AG04449 (cell line): ENCODE measurements at regions of chr19 and their contacts with region 1.

Region 1: DNA sequence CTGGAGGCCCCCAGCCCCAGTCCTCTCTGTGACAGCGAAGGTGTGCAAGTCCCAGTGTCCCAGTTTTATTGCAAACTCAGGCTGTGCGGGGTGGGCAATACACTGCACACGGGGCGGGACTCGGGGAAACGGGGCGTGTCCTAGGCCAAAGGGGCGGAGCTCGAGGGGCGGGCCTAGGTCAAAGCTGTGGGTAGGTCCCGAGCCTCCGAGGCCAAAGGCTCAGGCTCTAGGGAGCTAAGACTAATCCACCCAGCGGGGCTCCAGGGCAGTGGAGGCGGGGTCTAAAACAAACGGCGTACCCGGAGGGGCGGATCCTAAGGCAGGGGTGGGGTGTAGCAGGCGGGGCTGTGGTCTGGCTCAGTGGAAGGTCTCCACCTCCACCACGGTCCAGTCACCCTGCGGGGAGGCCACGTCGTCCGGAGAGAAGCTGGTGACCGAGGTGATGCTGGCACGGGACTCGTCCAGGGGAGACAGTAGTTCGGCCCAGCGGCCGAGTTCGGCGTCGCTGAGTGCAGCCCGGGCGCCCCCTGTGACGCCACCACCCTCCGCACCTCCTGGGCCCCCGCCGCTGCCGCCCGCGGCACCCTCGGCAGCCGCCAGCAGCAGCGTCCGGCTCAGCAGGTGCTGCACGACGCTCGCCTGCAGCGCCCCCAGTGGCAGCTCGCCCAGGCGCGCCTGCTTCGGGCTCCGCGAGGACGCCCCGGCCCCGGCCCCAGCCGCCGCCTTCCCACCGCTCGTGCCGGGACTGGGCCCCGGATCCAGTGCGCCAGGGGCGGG is 5.3 kb downstream of the PRR36 start:
- DNase-seq: no peak
- H3K4me3 ChIP-seq: peak overlapping the region; percentile 50
- CTCF ChIP-seq: peak; percentile 73

Region 2: DNA sequence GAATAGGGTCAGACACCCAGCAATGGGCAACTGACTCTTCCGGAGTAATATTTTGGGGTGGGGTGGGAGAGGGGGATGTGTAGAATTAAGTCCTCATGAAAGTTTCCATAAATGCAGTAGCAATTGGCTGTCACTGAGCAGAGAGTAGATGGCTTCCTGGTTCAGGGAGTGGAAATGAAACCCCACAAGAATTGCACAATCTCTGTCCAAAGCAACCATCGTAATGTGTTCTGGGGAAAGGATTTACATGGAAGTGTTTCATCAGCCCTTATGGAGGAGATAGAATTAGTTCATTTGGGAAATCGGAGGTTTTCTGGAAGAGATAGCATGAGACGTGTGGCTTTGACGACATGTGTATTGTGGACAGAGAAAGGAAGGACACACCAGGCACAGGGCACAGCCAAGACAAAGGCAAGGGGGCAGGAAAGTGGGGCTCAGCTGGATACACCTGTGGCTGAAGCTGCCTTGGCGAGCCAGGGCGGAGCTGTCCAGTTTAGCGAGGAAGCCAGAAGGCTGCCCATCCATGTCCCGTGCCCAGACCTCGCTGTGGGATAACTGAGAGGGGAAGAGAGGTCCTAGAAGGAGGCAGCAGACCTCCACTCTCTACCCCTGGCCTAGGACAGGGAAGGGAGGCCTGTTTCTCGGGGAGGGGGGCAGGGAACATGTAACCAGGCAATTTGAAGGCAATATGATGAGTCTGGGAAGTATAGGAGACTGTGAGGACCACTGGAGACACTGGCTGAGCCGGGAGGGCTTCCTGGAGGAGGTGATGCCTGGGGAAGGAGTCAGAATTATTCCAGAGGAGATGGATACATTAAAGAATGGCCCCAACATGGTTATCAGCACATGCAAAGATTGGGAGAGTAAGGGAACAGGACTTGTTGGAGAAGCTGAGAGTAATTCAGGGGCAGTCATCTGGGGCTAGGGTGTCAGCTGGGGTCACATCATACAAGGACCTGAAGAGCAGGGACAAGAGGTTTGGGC is 134.4 kb before region 1 on chr19:
- CTCF ChIA-PET with region 1: no interaction called
- POLR2A ChIA-PET with region 1: no interaction called
- DNase-seq: no peak
- H3K4me3 ChIP-seq: no peak overlapping the region
- CTCF ChIP-seq: no peak

Region 3: DNA sequence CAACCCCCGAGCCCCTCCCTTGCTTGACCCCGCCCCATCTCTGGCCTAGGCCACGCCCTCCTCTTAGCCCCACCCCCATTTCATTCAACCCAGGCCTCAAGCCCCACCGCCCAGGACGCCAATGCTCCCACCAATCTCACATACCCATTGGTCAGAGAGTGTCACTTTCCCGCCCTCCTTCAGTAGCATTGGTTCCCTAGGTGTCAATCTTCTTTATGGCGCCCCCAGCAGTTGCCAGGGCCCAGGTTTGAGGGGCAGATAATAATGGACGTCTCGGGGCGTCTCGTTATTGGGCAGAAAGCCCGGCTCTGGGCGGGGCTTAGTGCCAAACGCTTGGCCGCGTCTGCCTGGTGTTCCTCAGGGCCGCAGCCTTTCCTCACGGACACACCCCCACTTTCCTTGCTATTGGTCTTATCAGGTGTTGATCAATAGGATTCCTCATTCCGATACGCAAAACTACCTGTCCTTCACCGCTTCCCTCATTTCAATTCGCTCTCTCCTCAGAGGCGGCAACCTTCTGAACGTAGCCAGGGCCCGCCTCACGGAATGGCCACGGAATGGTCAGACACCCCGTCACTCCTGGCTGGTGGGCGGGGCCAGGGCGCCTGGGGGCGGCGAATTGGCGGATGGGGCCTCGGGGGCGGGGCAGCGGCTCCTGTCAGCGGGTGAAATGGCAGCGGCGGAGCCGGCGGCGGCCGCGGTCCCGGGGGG is 39.1 kb before region 1 on chr19 and contains the start of gene EVI5L:
- CTCF ChIA-PET with region 1: interaction called, 16 read pairs
- POLR2A ChIA-PET with region 1: no interaction called
- DNase-seq: peak; percentile 100
- H3K4me3 ChIP-seq: peak within 1 kb of the TSS; percentile 70
- CTCF ChIP-seq: no peak

Region 4: GRCh38 chr19:7852851-7853769 is 15.8 kb before region 1 on chr19:
- CTCF ChIA-PET with region 1: interaction called, 61 read pairs
- POLR2A ChIA-PET with region 1: interaction called, 4 read pairs
- DNase-seq: no peak
- H3K4me3 ChIP-seq: no peak overlapping the region
- CTCF ChIP-seq: peak; percentile 86

Region 5: DNA sequence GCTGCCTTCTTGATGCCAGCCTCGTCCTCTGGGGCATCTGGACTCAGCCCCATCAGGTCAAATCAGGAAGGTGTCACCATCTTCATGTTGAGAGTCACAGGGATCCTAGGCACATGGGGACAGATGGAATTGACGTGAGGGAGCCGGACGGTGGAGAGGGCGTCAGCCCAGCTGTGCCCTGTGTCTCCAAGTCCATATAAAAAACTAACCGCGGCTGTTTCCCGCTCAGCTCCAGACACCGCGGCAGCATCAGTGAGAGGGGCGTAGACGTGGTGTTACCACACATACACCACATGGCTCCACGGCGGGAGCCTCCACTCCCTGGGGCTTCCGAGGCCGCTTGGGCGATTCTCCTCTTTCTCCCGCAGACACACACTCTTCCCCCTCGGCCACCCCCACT is 11.0 kb after region 1 on chr19:
- CTCF ChIA-PET with region 1: interaction called, 19 read pairs
- POLR2A ChIA-PET with region 1: no interaction called
- DNase-seq: no peak
- H3K4me3 ChIP-seq: no peak overlapping the region
- CTCF ChIP-seq: no peak

Region 6: GRCh38 chr19:7888145-7888825 is 19.4 kb after region 1 on chr19 and contains the start of gene LRRC8E:
- CTCF ChIA-PET with region 1: interaction called, 13 read pairs
- POLR2A ChIA-PET with region 1: no interaction called
- DNase-seq: no peak
- H3K4me3 ChIP-seq: peak within 1 kb of the TSS; percentile 83
- CTCF ChIP-seq: no peak

Region 7: DNA sequence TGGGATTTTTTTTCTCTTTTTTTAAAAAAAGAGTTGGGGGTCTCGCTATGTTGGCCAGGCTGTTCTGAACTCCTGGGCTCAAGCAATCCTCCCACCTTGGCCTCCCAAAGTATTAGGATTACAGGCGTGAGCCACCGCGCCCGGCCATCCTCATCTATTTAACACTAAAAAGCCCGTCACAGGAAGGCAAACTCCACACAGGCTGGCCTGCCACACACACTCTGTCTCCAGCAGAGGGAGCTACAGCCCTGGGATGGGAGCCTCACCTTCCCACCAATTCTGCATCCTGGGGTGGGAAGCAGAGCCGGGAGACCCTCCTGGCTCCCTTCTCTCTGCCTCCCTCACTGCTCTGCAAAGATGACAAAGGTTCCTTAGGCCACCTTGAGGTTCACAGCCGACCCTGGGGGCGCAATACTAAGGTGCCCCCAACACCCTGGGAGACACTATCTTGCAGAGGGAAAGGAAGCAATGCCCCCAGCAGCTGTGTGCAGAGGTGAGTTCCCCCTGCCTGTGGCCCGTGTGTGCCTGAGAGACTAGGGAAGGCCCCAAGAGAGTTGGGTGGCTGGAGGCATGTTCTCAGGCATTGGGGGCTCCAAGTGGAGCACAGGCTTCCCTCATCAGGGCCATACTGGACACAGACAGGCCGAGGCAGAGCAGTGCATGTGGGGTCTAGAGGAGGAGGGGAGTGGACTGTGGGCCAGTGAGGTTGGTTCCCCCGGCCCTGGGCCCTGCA is 102.0 kb after region 1 on chr19:
- CTCF ChIA-PET with region 1: no interaction called
- POLR2A ChIA-PET with region 1: no interaction called
- DNase-seq: no peak
- H3K4me3 ChIP-seq: no peak overlapping the region
- CTCF ChIP-seq: peak; percentile 88